ENCODE measurements at regions of chr2 and their contacts with region 1.

Region 1: GRCh38 chr2:72770879-72771461 is 54.9 kb downstream of the EXOC6B start:
- DNase-seq: peak; percentile 78
- H3K4me3 ChIP-seq: no peak overlapping the region
- H3K27ac ChIP-seq: no peak overlapping the region
- H3K4me1 ChIP-seq: no peaks in the 10 kb centered on the region
- H3K27me3 ChIP-seq: no peaks in the 10 kb centered on the region
- CTCF ChIP-seq: peak; percentile 89

Region 2: GRCh38 chr2:72859831-72860262 is 88.9 kb after region 1 on chr2:
- intact Hi-C with region 1: loop called (anchors 2 kb)
- DNase-seq: peak; percentile 77
- H3K4me3 ChIP-seq: no peak overlapping the region
- H3K27ac ChIP-seq: no peak overlapping the region
- H3K4me1 ChIP-seq: peaks cover 5% of the 10 kb centered on the region
- H3K27me3 ChIP-seq: no peaks in the 10 kb centered on the region
- CTCF ChIP-seq: peak; percentile 48

Region 3: GRCh38 chr2:73187549-73187948 is 416.6 kb after region 1 on chr2:
- intact Hi-C with region 1: no loop called
- DNase-seq: no peak
- H3K4me3 ChIP-seq: no peak overlapping the region
- H3K27ac ChIP-seq: no peak overlapping the region
- H3K4me1 ChIP-seq: no peaks in the 10 kb centered on the region
- H3K27me3 ChIP-seq: no peaks in the 10 kb centered on the region
- CTCF ChIP-seq: no peak